ENCODE measurements at regions of chr11 and their contacts with region 1.

Region 1: DNA sequence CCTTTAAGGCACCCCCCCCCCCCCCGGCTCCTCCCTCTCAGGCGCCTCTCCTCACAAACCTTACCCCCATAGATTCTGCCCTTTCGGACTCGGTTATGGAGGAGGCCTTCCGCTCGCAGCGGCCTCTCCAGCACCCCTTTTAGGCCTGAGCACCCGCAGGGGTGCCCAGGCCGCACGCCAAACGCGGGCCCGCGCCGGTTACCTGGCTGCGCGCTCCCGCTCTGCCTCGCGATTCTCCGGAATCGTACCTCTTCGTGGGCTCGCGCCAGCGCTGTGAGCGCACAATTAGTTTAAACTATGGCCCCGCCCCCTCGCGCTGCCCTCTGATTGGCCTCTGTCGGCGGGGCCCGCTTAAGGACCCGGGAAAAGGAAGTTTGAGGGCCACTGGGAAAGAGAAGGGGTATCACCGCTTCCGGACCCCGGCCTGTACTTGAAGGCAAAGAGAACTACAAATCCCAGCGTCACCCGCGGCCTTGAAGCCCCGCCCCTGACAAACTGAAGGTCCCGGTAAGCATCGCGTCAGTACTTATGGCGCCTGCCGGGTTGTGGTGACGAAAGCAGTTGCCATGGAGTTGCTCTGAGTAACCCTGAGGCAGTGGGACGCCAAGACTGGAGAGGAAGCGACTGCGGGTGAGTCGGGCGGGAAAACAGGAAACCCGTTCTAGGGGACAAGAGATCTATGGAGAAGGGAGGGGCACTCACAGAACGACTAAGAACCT is at the starts of genes LRRC51 and NUMA1:
- DNase-seq: peak; percentile 100
- H3K4me3 Mint-ChIP-seq: peak within 1 kb of the TSS; percentile 88
- H3K27ac Mint-ChIP-seq: peak within 1 kb of the TSS; percentile 90
- H3K4me1 Mint-ChIP-seq: peaks cover 58% of the 10 kb centered on the region
- H3K27me3 Mint-ChIP-seq: no peaks in the 10 kb centered on the region
- total RNA-seq, gene LRRC51: 5.9 to 7.1 TPM
- total RNA-seq, gene NUMA1: 200 to 201 TPM

Region 2: DNA sequence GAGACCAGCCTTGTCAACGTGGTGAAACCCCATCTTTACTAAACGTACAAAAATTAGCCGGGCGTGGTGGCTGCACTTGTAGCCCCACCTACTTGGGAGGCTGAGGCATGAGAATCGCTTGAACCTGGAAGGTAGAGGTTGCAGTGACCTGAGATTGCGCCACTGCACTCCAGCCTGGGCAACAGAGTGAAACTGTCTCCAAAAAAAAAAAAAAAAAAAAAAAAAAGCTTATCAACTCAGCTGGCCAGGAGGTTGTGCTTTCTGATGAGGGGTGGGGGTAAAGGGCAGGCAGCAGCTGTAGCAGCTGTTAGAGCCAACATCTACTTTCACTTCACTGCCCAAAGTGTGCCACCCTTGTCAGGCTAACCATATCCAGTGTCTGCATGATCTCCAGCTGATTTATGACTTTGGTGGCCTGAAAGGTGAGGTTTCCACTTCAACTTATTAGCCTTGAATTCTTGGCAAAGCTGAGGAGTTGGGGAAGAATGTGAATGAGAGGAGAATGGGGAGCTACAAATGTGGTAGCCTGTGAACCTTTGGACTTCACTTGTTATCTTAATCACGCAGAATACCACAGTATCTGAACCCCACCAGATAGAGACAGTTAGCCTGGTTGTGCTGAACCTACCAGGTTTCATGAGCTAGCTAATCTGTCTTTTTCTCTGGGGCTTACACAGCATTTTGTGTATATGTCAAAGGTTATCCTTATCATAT is 131.9 kb before region 1 on chr11:
- CTCF ChIA-PET with region 1: no interaction called
- POLR2A ChIA-PET with region 1: no interaction called
- DNase-seq: no peak
- H3K4me3 Mint-ChIP-seq: no peak overlapping the region
- H3K27ac Mint-ChIP-seq: no peak overlapping the region
- H3K4me1 Mint-ChIP-seq: peaks cover 12% of the 10 kb centered on the region
- H3K27me3 Mint-ChIP-seq: no peaks in the 10 kb centered on the region

Region 3: DNA sequence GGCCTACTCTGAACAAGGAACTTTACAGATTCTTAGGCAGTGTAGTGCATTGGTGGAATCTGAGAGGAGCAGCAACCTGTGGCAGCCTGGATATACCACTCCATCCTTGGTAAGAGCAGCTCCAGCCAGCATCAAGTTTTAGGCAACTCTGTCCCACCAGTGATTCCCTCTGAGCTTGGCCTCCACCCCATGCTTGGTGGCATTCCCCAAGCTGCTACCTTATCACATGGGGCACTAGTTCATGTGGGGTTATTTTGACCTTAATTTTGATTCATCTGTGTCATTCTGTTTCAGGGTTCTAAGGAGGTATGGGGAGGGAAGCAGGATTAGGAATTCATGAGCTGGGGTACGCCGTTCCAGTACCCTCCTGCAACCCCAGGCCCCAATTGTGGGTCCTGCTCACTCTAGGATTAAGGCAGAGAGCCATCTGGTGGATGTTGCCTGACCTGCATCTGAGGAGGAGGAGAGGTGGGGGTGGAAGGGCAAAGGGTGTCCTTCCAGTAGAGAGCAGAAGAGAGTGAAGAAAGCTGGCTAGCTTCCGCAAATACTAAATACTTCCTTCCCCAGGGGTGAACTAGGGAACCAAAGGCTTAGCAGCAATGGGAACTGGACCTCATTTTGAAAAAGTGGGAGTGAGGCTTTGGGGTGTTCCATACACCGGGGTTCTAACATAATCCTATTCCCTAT is 10.7 kb after region 1 on chr11:
- CTCF ChIA-PET with region 1: interaction called, 13 read pairs
- POLR2A ChIA-PET with region 1: interaction called, 6 read pairs
- DNase-seq: peak; percentile 66
- H3K4me3 Mint-ChIP-seq: no peak overlapping the region
- H3K27ac Mint-ChIP-seq: no peak overlapping the region
- H3K4me1 Mint-ChIP-seq: peaks cover 18% of the 10 kb centered on the region
- H3K27me3 Mint-ChIP-seq: no peaks in the 10 kb centered on the region